ENCODE measurements at regions of chr1 and their contacts with region 1.

Region 1: DNA sequence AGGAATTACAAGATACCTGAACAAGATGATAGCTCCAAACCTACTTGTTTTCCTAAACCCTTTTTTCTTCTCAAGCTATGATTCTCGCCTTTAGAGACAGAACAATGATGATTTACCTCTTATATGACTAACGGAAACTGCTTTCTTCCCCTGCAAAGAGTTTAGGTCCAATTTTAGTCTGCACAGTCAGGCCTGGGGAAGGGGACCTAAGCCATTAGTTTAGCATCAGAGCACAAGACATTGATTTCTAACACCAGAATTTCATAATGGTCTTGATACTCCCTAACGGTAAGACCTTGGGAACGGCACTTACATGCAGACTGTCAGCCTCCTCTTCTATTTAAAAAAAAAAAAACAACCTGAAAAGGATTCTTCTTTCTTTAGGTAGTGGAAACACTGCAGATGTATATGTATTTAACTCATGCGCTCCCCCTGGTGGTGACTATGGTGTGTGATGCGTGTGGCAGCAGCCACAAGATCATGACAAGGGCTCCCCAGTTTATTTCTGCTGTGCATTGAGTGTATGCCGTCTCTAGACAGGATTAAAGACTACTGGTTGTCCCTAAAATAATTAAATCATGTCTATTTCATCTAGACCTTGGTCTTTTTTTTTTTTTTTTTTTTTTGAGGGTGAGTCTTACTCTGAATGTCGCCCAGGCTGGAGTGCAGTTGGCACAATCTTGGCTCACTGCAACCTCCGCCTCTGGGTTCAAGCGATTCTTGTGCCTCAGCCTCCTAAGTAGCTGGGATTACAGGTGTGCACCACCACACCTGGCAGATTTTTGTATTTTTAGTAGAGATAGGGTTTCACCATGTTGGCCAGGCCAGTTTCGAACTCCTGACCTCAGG is 37.3 kb upstream of the TMEM222 start:
- DNase-seq: peak; percentile 51 to 69
- H3K4me3 ChIP-seq: no peak overlapping the region
- H3K27ac ChIP-seq: no peak overlapping the region
- H3K4me1 ChIP-seq: no peaks in the 10 kb centered on the region
- H3K27me3 ChIP-seq: no peaks in the 10 kb centered on the region
- CTCF ChIP-seq: peak; percentile 77

Region 2: DNA sequence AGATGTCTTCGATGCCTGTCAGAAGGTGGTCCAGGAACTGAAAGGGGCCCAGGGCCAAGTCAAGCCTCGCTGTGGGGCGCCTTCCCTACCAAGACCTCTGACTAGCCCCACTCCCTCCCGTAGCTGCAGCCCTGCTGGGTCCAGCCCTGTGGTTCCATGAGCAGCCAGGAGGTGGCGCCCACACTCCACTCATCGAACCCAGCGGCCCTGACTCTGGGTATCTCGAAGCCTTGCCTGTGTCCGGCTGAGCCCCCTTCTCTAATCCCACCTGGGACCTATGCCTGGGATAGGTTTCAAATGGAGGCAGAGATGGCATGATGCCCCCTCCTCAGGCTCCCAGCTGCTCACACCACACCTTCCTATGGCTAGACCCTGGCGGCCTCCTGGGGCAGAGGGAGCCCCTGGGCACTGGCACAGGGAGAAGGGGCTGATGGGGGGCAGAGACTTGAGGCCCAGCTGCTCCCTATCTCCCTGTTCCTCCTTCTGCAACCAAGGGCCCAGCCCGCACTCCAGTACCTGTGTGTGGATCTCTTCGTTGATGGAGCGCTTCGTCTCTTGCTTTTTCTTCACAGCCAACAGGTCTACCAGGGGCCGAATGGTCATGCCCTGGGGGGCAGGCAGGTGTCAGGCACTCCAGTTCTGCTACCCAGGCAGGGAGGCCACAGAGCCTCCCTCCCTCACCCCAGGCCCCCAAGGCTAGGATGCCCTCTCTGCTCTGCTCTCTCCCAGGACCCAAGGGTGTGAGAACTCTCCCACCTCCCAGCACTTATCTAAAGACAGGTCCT is 181.8 kb before region 1 on chr1:
- CTCF ChIA-PET with region 1: interaction called, 7 read pairs
- POLR2A ChIA-PET with region 1: no interaction called
- intact Hi-C with region 1: loop called (anchors 1 kb)
- DNase-seq: peak in 1 of 2 experiments; percentile 71
- H3K4me3 ChIP-seq: no peak overlapping the region
- H3K27ac ChIP-seq: no peak overlapping the region
- H3K4me1 ChIP-seq: 0 out of 2 replicates have a peak, but pooled peaks cover 12% of the 10 kb centered on the region
- H3K27me3 ChIP-seq: no peaks in the 10 kb centered on the region
- CTCF ChIP-seq: peak; percentile 93

Region 3: GRCh38 chr1:27111626-27112573 is 172.7 kb before region 1 on chr1:
- CTCF ChIA-PET with region 1: interaction called, 9 read pairs
- POLR2A ChIA-PET with region 1: interaction called, 3 read pairs
- intact Hi-C with region 1: loop called (anchors 2 kb)
- DNase-seq: peak; percentile 80 to 94
- H3K4me3 ChIP-seq: no peak overlapping the region
- H3K27ac ChIP-seq: peak overlapping the region; percentile 75
- H3K4me1 ChIP-seq: peaks cover 18% of the 10 kb centered on the region
- H3K27me3 ChIP-seq: no peaks in the 10 kb centered on the region
- CTCF ChIP-seq: no peak; the same call in 1 of the 2 replicates

Region 4: GRCh38 chr1:27179379-27179778 is 105.3 kb before region 1 on chr1:
- CTCF ChIA-PET with region 1: interaction called, 11 read pairs
- POLR2A ChIA-PET with region 1: no interaction called
- intact Hi-C with region 1: no loop called
- DNase-seq: no peak
- H3K4me3 ChIP-seq: no peak overlapping the region
- H3K27ac ChIP-seq: no peak overlapping the region
- H3K4me1 ChIP-seq: no peaks in the 10 kb centered on the region
- H3K27me3 ChIP-seq: no peaks in the 10 kb centered on the region
- CTCF ChIP-seq: no peak

Region 5: DNA sequence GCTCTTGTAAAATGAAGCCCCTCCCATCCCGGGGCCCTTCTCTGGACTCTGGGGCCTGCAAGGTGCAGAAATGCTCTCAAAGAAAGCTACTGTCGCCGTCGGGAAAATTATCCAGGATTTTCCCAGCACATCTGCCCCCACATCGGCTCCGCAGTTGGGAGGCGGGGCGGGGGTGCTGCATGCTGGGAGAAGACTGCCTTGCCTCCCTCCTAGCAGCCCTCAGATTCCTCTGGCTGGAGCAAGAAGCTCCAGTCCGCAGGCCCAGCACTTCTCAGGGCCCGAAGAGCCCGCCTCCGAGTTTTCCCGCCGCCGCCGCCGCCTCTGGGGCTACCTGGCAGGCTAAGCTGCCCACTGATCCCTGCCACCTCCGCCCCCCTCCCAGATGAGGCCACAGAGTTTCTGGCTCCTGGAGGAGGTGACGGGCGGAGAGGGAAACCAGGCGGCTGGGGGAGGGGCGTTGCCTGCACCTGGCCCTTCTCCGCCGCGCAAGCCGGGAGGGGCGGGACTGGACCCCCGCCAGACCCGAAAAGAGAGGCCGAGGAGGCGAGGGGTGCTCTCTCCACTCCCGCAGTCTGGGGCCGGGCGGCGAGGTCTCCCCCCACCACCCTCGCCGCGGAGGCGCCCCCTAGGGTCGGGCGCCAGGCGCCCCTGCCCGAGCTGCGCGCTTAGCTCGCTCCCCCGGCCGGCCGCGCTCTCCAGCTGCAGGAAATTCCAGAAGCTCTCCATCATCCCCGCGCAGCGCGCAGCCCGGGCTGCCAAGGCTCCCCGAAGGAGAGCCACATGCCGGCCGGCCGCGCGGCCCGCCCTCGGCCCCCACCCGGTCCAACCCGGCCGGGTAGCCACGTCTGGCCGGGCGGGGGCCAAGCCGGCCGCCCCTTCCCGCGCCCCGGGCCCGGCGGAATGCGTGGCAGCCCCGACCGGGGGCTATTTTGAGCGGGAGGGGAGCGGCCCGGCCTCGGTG is 290.5 kb after region 1 on chr1:
- CTCF ChIA-PET with region 1: interaction called, 13 read pairs
- POLR2A ChIA-PET with region 1: no interaction called
- intact Hi-C with region 1: no loop called
- DNase-seq: no peak
- H3K4me3 ChIP-seq: no peak overlapping the region
- H3K27ac ChIP-seq: no peak overlapping the region
- H3K4me1 ChIP-seq: no peaks in the 10 kb centered on the region
- H3K27me3 ChIP-seq: no peaks in the 10 kb centered on the region
- CTCF ChIP-seq: no peak